ENCODE measurements at regions of chr19 and their contacts with region 1.

Region 1: GRCh38 chr19:28213470-28214082 is 999.4 kb downstream of the UQCRFS1 start:
- DNase-seq: no peak
- ATAC-seq: no peak

Region 2: GRCh38 chr19:28152195-28152594 is 61.4 kb before region 1 on chr19:
- intact Hi-C with region 1: no loop called
- DNase-seq: no peak
- ATAC-seq: no peak

Region 3: GRCh38 chr19:29645911-29646310 is 1432.3 kb after region 1 on chr19:
- intact Hi-C with region 1: loop called (anchors 5 kb)
- DNase-seq: no peak
- ATAC-seq: peak; percentile 76